MCF 10A (cell line): ENCODE measurements at regions of chr10 and their contacts with region 1.

Region 1: GRCh38 chr10:127715782-127716378 is 21.1 kb upstream of the FOXI2 start:
- DNase-seq: peak; percentile 37
- H3K4me3 Mint-ChIP-seq: no peak overlapping the region
- H3K27ac Mint-ChIP-seq: no peak overlapping the region
- H3K4me1 Mint-ChIP-seq: no peaks in the 10 kb centered on the region
- H3K27me3 Mint-ChIP-seq: peaks cover 22% of the 10 kb centered on the region
- CTCF ChIP-seq: peak; percentile 11

Region 2: DNA sequence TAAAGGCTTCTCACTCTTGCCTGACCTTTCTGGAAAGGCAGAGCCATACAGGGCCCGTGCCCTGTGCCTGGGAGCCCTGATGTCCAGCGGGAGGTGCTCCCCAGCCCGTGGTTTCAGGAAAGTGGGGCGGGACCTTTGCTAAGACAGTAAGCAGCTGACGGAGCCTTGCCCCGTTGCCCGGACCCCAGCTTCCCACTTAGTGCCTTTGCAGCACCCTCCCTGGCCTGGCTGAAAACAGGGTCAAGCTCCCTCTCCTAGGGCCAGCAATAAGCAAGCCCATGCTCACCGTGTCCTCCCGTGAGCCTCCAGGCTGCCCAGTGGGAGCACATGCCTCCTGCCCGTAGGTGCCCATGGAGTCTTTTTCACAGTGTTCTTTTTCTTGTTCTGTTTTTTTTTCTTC is 332.4 kb before region 1 on chr10:
- CTCF ChIA-PET with region 1: no interaction called
- POLR2A ChIA-PET with region 1: no interaction called
- intact Hi-C with region 1: no loop called
- DNase-seq: no peak
- H3K4me3 Mint-ChIP-seq: no peak overlapping the region
- H3K27ac Mint-ChIP-seq: no peak overlapping the region
- H3K4me1 Mint-ChIP-seq: no peaks in the 10 kb centered on the region
- H3K27me3 Mint-ChIP-seq: no peaks in the 10 kb centered on the region
- CTCF ChIP-seq: no peak

Region 3: DNA sequence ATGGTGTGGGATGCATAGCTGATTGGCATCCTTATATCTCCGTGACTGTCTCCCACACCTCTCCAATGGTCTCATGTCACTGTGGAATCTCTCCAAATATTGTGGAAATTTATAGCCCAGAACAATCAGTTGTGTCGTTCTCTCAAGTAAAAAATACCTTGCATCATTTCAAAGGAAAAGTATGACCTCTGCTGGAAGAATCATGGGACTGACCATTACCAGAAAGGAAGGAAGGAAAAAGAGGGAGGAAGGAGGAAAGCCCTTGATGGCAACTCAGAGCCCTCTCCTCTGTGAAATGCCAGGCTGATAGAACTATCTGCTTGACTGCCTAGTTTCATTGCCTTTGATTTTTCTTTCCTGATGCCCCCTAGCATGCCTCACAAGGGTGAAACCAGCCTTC is 97.4 kb after region 1 on chr10:
- CTCF ChIA-PET with region 1: interaction called, 3 read pairs
- POLR2A ChIA-PET with region 1: no interaction called
- intact Hi-C with region 1: loop called (anchors 5 kb)
- DNase-seq: peak; percentile 16
- H3K4me3 Mint-ChIP-seq: no peak overlapping the region
- H3K27ac Mint-ChIP-seq: no peak overlapping the region
- H3K4me1 Mint-ChIP-seq: no peaks in the 10 kb centered on the region
- H3K27me3 Mint-ChIP-seq: peaks cover 41% of the 10 kb centered on the region
- CTCF ChIP-seq: peak; percentile 18

Region 4: GRCh38 chr10:127853868-127854768 is 138.2 kb after region 1 on chr10:
- CTCF ChIA-PET with region 1: interaction called, 42 read pairs
- POLR2A ChIA-PET with region 1: no interaction called
- intact Hi-C with region 1: loop called (anchors 1 kb)
- DNase-seq: peak; percentile 67
- H3K4me3 Mint-ChIP-seq: no peak overlapping the region
- H3K27ac Mint-ChIP-seq: no peak overlapping the region
- H3K4me1 Mint-ChIP-seq: no peaks in the 10 kb centered on the region
- H3K27me3 Mint-ChIP-seq: peaks cover 20% of the 10 kb centered on the region
- CTCF ChIP-seq: peak; percentile 78

Region 5: DNA sequence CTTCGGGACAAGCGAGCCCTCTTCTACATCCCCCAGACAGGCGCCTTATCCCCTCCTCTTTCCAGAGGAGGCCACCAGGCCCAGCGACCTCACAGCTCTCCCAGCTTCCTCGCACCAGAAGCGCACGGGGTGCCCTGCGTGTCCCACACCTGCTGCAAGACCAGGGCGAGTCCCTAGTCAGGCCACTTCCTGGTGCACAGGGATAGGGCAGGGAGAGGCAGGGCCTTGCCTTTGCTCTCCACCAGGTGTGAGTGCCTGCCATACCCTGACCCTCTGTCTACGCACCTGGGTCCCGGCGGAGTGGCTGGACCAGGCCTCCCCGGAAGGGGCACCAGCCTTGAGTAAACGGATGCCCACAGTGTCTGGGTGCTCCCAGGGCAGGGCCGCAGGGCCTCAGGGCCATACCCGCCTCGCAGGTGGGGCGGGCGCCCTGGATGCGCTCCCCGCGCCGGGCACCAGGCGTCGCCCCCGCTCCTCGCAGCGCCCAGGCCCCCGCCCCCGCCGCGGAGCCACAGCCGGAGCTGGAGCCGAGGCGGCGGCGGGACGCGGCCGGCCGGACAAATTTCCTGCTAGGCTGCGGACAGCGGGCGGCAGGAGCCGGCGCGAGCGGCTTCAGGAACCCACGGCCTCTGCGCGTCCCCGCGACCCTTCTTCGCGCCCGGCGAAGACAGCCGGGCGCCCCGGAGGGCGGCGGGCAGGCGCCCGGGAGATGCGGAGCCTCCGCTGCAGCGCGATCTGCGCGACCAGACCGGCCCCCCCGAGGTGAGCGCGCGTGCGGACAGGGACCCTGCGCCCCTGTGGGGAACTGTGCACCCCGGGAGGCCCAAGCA is 190.9 kb after region 1 on chr10 and contains the start of gene PTPRE:
- CTCF ChIA-PET with region 1: interaction called, 4 read pairs
- POLR2A ChIA-PET with region 1: no interaction called
- intact Hi-C with region 1: loop called (anchors 5 kb)
- DNase-seq: peak; percentile 69
- H3K4me3 Mint-ChIP-seq: peak within 1 kb of the TSS; percentile 62
- H3K27ac Mint-ChIP-seq: no peak within 1 kb of the TSS
- H3K4me1 Mint-ChIP-seq: peaks cover 7% of the 10 kb centered on the region
- H3K27me3 Mint-ChIP-seq: no peaks in the 10 kb centered on the region
- CTCF ChIP-seq: peak; percentile 90
- total RNA-seq, gene PTPRE: 21.8 and 34.6 TPM in 2 replicates

Region 6: GRCh38 chr10:127962205-127962604 is 246.3 kb after region 1 on chr10:
- CTCF ChIA-PET with region 1: no interaction called
- POLR2A ChIA-PET with region 1: no interaction called
- intact Hi-C with region 1: no loop called
- DNase-seq: no peak
- H3K4me3 Mint-ChIP-seq: no peak overlapping the region
- H3K27ac Mint-ChIP-seq: no peak overlapping the region
- H3K4me1 Mint-ChIP-seq: no peaks in the 10 kb centered on the region
- H3K27me3 Mint-ChIP-seq: no peaks in the 10 kb centered on the region
- CTCF ChIP-seq: no peak

Region 7: GRCh38 chr10:128069351-128070051 is 353.6 kb after region 1 on chr10:
- CTCF ChIA-PET with region 1: interaction called, 7 read pairs
- POLR2A ChIA-PET with region 1: no interaction called
- intact Hi-C with region 1: loop called (anchors 2 kb)
- DNase-seq: peak; percentile 79
- H3K4me3 Mint-ChIP-seq: no peak overlapping the region
- H3K27ac Mint-ChIP-seq: peak overlapping the region; percentile 70
- H3K4me1 Mint-ChIP-seq: peaks cover 25% of the 10 kb centered on the region
- H3K27me3 Mint-ChIP-seq: no peaks in the 10 kb centered on the region
- CTCF ChIP-seq: peak; percentile 85

Region 8: GRCh38 chr10:128211953-128212727 is 496.3 kb after region 1 on chr10:
- CTCF ChIA-PET with region 1: no interaction called
- POLR2A ChIA-PET with region 1: no interaction called
- intact Hi-C with region 1: no loop called
- DNase-seq: peak; percentile 82
- H3K4me3 Mint-ChIP-seq: peak overlapping the region; percentile 58
- H3K27ac Mint-ChIP-seq: no peak overlapping the region
- H3K4me1 Mint-ChIP-seq: no peaks in the 10 kb centered on the region
- H3K27me3 Mint-ChIP-seq: no peaks in the 10 kb centered on the region
- CTCF ChIP-seq: peak; percentile 91